ENCODE measurements at regions of chr17 and their contacts with region 1.

Region 1: GRCh38 chr17:67800495-67800928 is 24.8 kb upstream of the BPTF start:
- DNase-seq: peak; percentile 59
- ATAC-seq: peak; percentile 96
- H3K4me3 ChIP-seq: no peak overlapping the region
- H3K27ac ChIP-seq: no peak overlapping the region
- H3K4me1 ChIP-seq: no peaks in the 10 kb centered on the region
- H3K27me3 ChIP-seq: no peaks in the 10 kb centered on the region
- CTCF ChIP-seq: peak; percentile 83 to 91 (median 84); a peak in 5 of 6 replicates
- EP300 ChIP-seq: no peak
- POLR2A ChIP-seq: no peak
- RAD21 ChIP-seq: peak; percentile 97

Region 2: GRCh38 chr17:67818110-67819002 is 17.8 kb after region 1 on chr17:
- CTCF ChIA-PET with region 1: interaction called, 133 read pairs
- POLR2A ChIA-PET with region 1: interaction called, 11 read pairs
- RAD21 ChIA-PET with region 1: interaction called, 34 read pairs
- SMC1A ChIA-PET with region 1: interaction called, 63 read pairs
- in situ Hi-C with region 1: no loop called
- intact Hi-C with region 1: no loop called
- DNase-seq: peak; percentile 88
- ATAC-seq: peak; percentile 76
- H3K4me3 ChIP-seq: no peak overlapping the region
- H3K27ac ChIP-seq: peak overlapping the region; percentile 45; the same call in 1 of the 2 replicates
- H3K4me1 ChIP-seq: peaks cover 44% of the 10 kb centered on the region
- H3K27me3 ChIP-seq: no peaks in the 10 kb centered on the region
- CTCF ChIP-seq: no peak
- EP300 ChIP-seq: peak; percentile 49 to 72; a peak in 2 of 4 replicates
- POLR2A ChIP-seq: no peak
- RAD21 ChIP-seq: no peak

Region 3: DNA sequence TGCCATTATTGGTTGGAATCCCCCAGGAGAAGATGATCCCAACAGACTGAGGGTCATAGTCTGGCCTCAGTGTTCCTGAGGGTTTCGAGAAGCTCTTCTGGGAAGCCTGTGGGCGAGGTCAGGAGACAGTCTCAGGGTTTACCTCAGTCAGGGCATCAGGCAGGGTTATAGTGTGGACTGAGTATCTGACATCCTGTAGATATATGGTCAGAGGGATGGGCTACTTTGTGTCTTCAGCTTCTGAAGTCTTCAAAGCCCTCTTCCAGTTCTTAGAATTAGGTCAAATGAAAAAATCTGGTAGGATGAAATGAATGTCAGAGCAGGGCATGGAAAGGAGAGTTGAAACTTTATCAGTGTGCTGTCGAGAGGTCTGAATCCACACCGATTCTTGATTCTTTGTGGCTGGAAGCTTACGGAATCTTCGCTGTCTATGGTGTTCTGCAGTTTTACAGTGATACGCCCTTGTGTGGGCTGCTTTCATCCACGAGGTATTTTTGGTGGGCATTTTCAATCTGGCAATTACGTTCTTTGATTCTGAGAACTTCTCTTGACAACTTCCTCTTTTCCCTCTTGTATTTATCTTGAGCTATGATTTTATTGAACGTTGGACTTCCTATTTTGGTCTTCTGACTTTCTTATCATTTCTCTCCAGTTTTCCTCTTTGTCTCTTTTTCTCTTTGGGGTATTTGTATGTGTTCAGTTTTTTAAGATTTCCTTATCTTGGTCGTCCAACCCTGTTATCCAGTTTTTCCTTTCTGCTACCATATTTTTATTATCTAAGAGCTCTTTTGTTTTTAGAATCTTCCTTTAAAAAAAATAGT is 55.2 kb after region 1 on chr17:
- CTCF ChIA-PET with region 1: interaction called, 12 read pairs
- POLR2A ChIA-PET with region 1: no interaction called
- RAD21 ChIA-PET with region 1: no interaction called
- SMC1A ChIA-PET with region 1: interaction called, 5 read pairs
- in situ Hi-C with region 1: no loop called
- intact Hi-C with region 1: no loop called
- DNase-seq: no peak
- ATAC-seq: peak; percentile 80
- H3K4me3 ChIP-seq: peak overlapping the region; percentile 42
- H3K27ac ChIP-seq: peak overlapping the region; percentile 65
- H3K4me1 ChIP-seq: peaks cover 7% of the 10 kb centered on the region
- H3K27me3 ChIP-seq: no peaks in the 10 kb centered on the region
- CTCF ChIP-seq: no peak
- EP300 ChIP-seq: no peak
- POLR2A ChIP-seq: no peak
- RAD21 ChIP-seq: no peak

Region 4: DNA sequence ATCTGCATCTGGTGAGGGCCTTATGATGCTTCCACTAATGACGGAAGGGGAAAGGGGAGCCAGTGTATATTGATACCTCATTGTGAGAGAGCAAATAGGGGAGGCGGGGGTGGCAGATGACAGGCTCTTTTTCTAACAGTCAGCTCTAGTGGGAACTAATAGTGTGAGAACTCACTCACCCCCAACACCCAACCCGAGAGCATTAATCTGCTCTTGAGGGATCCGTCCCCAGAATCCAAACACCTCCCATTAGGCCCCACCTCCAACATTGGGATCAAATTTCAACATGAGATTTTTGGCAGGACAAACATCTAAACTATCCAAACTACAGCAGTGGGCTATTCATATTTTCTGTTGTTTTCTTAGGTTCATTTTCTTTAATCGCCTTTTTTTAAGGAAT is 79.2 kb after region 1 on chr17:
- CTCF ChIA-PET with region 1: interaction called, 6 read pairs
- POLR2A ChIA-PET with region 1: no interaction called
- RAD21 ChIA-PET with region 1: interaction called, 5 read pairs
- SMC1A ChIA-PET with region 1: interaction called, 3 read pairs
- in situ Hi-C with region 1: no loop called
- intact Hi-C with region 1: loop called (anchors 5 kb)
- DNase-seq: no peak
- ATAC-seq: no peak
- H3K4me3 ChIP-seq: no peak overlapping the region
- H3K27ac ChIP-seq: no peak overlapping the region
- H3K4me1 ChIP-seq: no peaks in the 10 kb centered on the region
- H3K27me3 ChIP-seq: no peaks in the 10 kb centered on the region
- CTCF ChIP-seq: no peak
- EP300 ChIP-seq: no peak
- POLR2A ChIP-seq: no peak
- RAD21 ChIP-seq: no peak

Region 5: DNA sequence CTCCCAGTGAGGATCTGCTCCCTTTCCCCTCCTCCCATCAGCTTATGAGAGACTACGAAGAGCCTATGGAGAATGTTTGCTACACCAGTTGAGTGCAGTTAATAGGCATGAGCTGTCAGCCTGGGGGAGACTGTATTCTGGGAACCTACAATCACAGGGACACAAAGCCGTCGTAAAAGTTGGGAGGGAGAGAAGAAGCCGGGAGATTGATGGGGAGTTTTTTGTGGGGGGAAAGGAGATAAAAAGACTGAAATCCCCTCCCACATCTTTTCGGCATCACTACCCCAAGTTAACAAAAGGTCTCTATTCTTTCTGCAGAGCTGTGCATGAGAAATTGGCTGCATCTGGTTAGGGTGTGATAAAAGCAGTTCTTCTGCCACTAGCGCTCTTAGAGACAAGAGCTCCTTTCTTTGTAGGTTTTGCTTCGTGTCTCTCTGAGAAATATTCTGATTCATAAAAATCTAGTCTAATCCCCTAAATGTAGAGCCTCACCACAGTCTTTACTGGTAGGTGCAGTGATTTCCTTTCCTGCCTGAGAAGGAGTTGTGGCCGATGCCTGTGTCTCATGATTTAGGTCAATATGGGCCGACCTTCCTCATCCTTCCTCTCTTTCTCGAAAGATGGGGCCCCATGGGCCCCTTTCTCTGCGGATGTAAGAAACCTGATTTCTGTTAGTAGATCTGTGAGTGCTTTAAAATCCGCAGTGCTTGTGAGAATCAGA is 102.2 kb after region 1 on chr17:
- CTCF ChIA-PET with region 1: interaction called, 6 read pairs
- POLR2A ChIA-PET with region 1: no interaction called
- RAD21 ChIA-PET with region 1: interaction called, 3 read pairs
- SMC1A ChIA-PET with region 1: no interaction called
- in situ Hi-C with region 1: no loop called
- intact Hi-C with region 1: loop called (anchors 5 kb)
- DNase-seq: no peak
- ATAC-seq: no peak
- H3K4me3 ChIP-seq: no peak overlapping the region
- H3K27ac ChIP-seq: no peak overlapping the region
- H3K4me1 ChIP-seq: no peaks in the 10 kb centered on the region
- H3K27me3 ChIP-seq: no peaks in the 10 kb centered on the region
- CTCF ChIP-seq: no peak
- EP300 ChIP-seq: no peak
- POLR2A ChIP-seq: no peak
- RAD21 ChIP-seq: no peak

Measured in GM12878 (cell line).